GM12878 (cell line): ENCODE measurements at regions of chr2 and their contacts with region 1.

Region 1: GRCh38 chr2:71276311-71277146 is 49.6 kb upstream of the PAIP2B start:
- DNase-seq: peak; percentile 45
- ATAC-seq: peak; percentile 98
- H3K4me3 ChIP-seq: peak overlapping the region; percentile 78
- H3K27ac ChIP-seq: no peak overlapping the region
- H3K4me1 ChIP-seq: no peaks in the 10 kb centered on the region
- H3K27me3 ChIP-seq: no peaks in the 10 kb centered on the region
- CTCF ChIP-seq: no peak
- EP300 ChIP-seq: no peak
- POLR2A ChIP-seq: peak; percentile 66
- RAD21 ChIP-seq: no peak

Region 2: GRCh38 chr2:71018625-71019024 is 257.9 kb before region 1 on chr2:
- CTCF ChIA-PET with region 1: no interaction called
- POLR2A ChIA-PET with region 1: no interaction called
- RAD21 ChIA-PET with region 1: no interaction called
- SMC1A ChIA-PET with region 1: no interaction called
- in situ Hi-C with region 1: no loop called
- intact Hi-C with region 1: loop called (anchors 10 kb)
- DNase-seq: no peak
- ATAC-seq: no peak
- H3K4me3 ChIP-seq: no peak overlapping the region
- H3K27ac ChIP-seq: no peak overlapping the region
- H3K4me1 ChIP-seq: no peaks in the 10 kb centered on the region
- H3K27me3 ChIP-seq: no peaks in the 10 kb centered on the region
- CTCF ChIP-seq: no peak
- EP300 ChIP-seq: no peak
- POLR2A ChIP-seq: no peak
- RAD21 ChIP-seq: no peak

Region 3: DNA sequence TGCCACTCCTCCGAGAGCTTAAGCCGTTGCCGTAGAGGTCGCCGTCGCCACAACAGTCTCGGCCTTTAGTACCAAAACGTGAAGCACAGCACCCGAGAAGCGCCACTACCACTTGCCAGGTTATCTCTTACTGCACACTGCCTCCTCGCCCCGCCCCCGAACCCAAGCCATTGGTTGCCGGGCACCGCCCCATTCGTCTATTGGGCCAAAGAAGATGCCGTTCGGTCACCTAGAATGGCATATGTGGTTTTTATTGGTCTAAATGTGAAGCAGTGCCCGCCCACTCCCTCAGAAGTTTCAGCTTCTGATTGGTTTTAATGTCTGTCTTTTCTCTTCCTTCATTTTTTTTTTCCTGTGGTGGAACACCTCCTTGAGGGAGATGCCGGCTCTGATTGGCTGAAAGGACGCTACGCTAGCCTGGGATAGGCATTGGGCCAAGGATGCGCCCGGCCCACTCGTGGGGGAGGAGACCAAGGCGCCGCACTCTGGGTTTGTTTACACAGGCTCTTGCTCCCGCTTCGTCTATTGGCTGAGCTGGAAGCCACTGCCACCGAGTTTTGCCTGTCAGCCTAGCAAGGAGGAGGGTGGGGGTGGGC is 49.5 kb before region 1 on chr2 and contains the start of gene PAIP2B:
- CTCF ChIA-PET with region 1: no interaction called
- POLR2A ChIA-PET with region 1: no interaction called
- RAD21 ChIA-PET with region 1: interaction called, 3 read pairs
- SMC1A ChIA-PET with region 1: interaction called, 3 read pairs
- in situ Hi-C with region 1: no loop called
- intact Hi-C with region 1: loop called (anchors 5 kb)
- DNase-seq: peak; percentile 98
- ATAC-seq: peak; percentile 98
- H3K4me3 ChIP-seq: peak within 1 kb of the TSS; percentile 71
- H3K27ac ChIP-seq: no peak within 1 kb of the TSS
- H3K4me1 ChIP-seq: no peaks in the 10 kb centered on the region; the same call in 1 of the 2 replicates
- H3K27me3 ChIP-seq: no peaks in the 10 kb centered on the region
- CTCF ChIP-seq: no peak
- EP300 ChIP-seq: no peak
- POLR2A ChIP-seq: peak; percentile 78
- RAD21 ChIP-seq: no peak
- polyA plus RNA-seq, gene PAIP2B: 0.06 to 0.09 TPM

Region 4: DNA sequence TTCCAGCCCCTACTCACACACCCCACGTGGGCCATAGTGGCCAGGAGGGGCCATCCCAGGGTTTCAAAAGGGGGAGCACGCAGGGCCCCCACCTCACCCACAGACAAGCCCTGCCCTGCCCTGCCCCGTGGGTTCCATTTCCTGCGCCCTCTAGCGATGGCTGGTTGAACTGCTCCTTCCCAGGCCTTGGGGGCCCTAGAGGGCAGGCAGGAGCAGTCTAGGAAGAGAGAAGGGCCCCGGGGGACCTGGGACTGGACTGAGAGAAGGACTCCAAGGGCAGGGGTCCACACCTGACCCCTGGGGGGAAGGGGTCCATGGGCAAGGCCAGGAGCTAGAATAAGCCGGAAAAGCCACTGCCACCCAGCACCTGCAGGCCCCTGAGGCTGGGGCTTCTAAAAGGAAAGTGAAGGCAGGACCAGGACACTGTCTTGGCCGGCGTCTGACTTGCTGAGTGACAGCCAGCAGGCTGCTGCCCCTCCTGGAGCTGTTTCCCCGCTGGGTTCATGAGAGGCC is 861.0 kb after region 1 on chr2:
- CTCF ChIA-PET with region 1: no interaction called
- POLR2A ChIA-PET with region 1: no interaction called
- RAD21 ChIA-PET with region 1: no interaction called
- SMC1A ChIA-PET with region 1: no interaction called
- in situ Hi-C with region 1: loop called (anchors 25 kb)
- intact Hi-C with region 1: no loop called
- DNase-seq: no peak
- ATAC-seq: peak; percentile 98
- H3K4me3 ChIP-seq: no peak overlapping the region
- H3K27ac ChIP-seq: no peak overlapping the region
- H3K4me1 ChIP-seq: no peaks in the 10 kb centered on the region
- H3K27me3 ChIP-seq: no peaks in the 10 kb centered on the region
- CTCF ChIP-seq: peak; percentile 89 to 94 (median 93)
- EP300 ChIP-seq: no peak
- POLR2A ChIP-seq: no peak
- RAD21 ChIP-seq: peak; percentile 60